ENCODE measurements at regions of chr12 and their contacts with region 1.

Region 1: GRCh38 chr12:52879394-52880351 is 25.2 kb downstream of the KRT8 start:
- DNase-seq: peak; percentile 80 to 81
- H3K4me3 ChIP-seq: peak overlapping the region; percentile 31; the same call in 1 of the 2 replicates
- H3K27ac ChIP-seq: peak overlapping the region; percentile 51
- H3K4me1 ChIP-seq: peaks cover 19% of the 10 kb centered on the region
- H3K27me3 ChIP-seq: no peaks in the 10 kb centered on the region
- CTCF ChIP-seq: peak; percentile 86

Region 2: GRCh38 chr12:52032804-52033502 is 846.7 kb before region 1 on chr12:
- CTCF ChIA-PET with region 1: no interaction called
- POLR2A ChIA-PET with region 1: no interaction called
- intact Hi-C with region 1: loop called (anchors 5 kb)
- DNase-seq: peak; percentile 89 to 93
- H3K4me3 ChIP-seq: peak overlapping the region; percentile 53; the same call in 1 of the 2 replicates
- H3K27ac ChIP-seq: no peak overlapping the region
- H3K4me1 ChIP-seq: peaks cover 25% of the 10 kb centered on the region
- H3K27me3 ChIP-seq: no peaks in the 10 kb centered on the region; the same call in 1 of the 2 replicates
- CTCF ChIP-seq: no peak

Region 3: GRCh38 chr12:52156736-52157565 is 722.7 kb before region 1 on chr12:
- CTCF ChIA-PET with region 1: interaction called, 5 read pairs
- POLR2A ChIA-PET with region 1: no interaction called
- intact Hi-C with region 1: loop called (anchors 1 kb)
- DNase-seq: peak; percentile 54 to 82
- H3K4me3 ChIP-seq: no peak overlapping the region
- H3K27ac ChIP-seq: no peak overlapping the region
- H3K4me1 ChIP-seq: peaks cover 58% of the 10 kb centered on the region
- H3K27me3 ChIP-seq: no peaks in the 10 kb centered on the region
- CTCF ChIP-seq: peak; percentile 99

Region 4: GRCh38 chr12:52327052-52327829 is 552.4 kb before region 1 on chr12:
- CTCF ChIA-PET with region 1: interaction called, 5 read pairs
- POLR2A ChIA-PET with region 1: no interaction called
- intact Hi-C with region 1: loop called (anchors 1 kb)
- DNase-seq: peak; percentile 86 to 94
- H3K4me3 ChIP-seq: no peak overlapping the region
- H3K27ac ChIP-seq: no peak overlapping the region
- H3K4me1 ChIP-seq: peaks cover 12% of the 10 kb centered on the region
- H3K27me3 ChIP-seq: no peaks in the 10 kb centered on the region
- CTCF ChIP-seq: peak; percentile 85

Region 5: GRCh38 chr12:52390739-52391617 is 488.7 kb before region 1 on chr12:
- CTCF ChIA-PET with region 1: interaction called, 12 read pairs
- POLR2A ChIA-PET with region 1: no interaction called
- intact Hi-C with region 1: loop called (anchors 5 kb)
- DNase-seq: peak in 1 of 2 experiments; percentile 31
- H3K4me3 ChIP-seq: no peak overlapping the region
- H3K27ac ChIP-seq: no peak overlapping the region
- H3K4me1 ChIP-seq: no peaks in the 10 kb centered on the region
- H3K27me3 ChIP-seq: no peaks in the 10 kb centered on the region
- CTCF ChIP-seq: peak; percentile 83

Measured in PC-9 (cell line).